ENCODE measurements at regions of chr5 and their contacts with region 1.

Region 1: DNA sequence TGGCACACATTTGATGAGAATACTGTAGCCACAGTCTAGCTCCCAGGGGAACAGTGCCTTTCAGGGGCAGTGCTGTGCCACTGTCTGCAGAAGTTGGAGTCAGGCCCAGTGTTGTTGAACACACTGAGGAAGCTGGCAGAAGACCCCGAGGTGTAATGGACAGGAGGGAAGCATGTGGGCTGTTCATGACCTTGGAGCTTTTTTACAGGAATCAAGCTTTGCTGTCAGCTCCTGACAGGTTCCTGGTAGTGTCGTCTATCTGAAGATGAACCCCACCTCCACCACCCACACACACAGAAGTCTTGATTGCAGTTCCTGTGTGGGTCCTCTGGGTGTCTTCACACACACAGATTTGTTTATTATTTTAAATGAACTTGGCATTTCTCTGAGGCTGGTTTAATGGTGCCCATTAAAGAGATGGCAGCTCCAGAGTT is 40.3 kb upstream of the TNFAIP8 start:
- DNase-seq: peak; percentile 43
- H3K4me3 ChIP-seq: no peak overlapping the region
- H3K27ac ChIP-seq: no peak overlapping the region
- H3K4me1 ChIP-seq: no peaks in the 10 kb centered on the region
- H3K27me3 ChIP-seq: no peaks in the 10 kb centered on the region
- CTCF ChIP-seq: peak; percentile 12 to 21
- POLR2A ChIP-seq: no peak

Region 2: GRCh38 chr5:119332978-119333401 is 17.5 kb after region 1 on chr5:
- CTCF ChIA-PET with region 1: interaction called, 12 read pairs
- POLR2A ChIA-PET with region 1: no interaction called
- dilution Hi-C with region 1: no loop called
- intact Hi-C with region 1: no loop called
- DNase-seq: no peak
- H3K4me3 ChIP-seq: no peak overlapping the region
- H3K27ac ChIP-seq: no peak overlapping the region
- H3K4me1 ChIP-seq: no peaks in the 10 kb centered on the region
- H3K27me3 ChIP-seq: no peaks in the 10 kb centered on the region
- CTCF ChIP-seq: no peak
- POLR2A ChIP-seq: no peak